ENCODE measurements at regions of chr10 and their contacts with region 1.

Region 1: DNA sequence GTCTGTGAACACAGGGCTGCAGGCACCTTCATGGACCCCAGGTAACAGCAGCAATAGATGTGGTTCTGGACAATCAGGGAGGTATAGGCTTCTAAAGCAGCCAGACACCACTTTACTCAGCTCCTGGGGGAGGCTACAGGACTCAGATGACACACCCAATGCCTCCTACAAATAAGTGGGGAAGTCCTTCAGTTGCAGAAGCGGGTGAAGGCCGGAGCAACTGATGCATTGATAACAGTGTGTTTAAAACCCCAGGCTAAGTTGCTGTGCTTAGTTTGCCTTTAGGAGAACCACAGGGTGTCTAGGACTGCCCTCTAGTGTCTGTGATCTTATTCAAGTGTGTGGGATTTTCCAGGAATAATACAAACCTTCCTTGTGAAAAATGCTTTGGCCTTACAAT is 5.9 kb upstream of the ITGA8 start:
- DNase-seq: no peak
- ATAC-seq: no peak
- H3K4me3 ChIP-seq: no peak overlapping the region
- H3K27ac ChIP-seq: no peak overlapping the region
- H3K4me1 ChIP-seq: no peaks in the 10 kb centered on the region
- H3K27me3 ChIP-seq: peaks cover 0 to 5% (median 0%) of the 10 kb centered on the region in 3 donors
- CTCF ChIP-seq: peak in 3 of 5 experiments; percentile 21 to 46 (median 45)
- POLR2A ChIP-seq: no peak

Region 2: DNA sequence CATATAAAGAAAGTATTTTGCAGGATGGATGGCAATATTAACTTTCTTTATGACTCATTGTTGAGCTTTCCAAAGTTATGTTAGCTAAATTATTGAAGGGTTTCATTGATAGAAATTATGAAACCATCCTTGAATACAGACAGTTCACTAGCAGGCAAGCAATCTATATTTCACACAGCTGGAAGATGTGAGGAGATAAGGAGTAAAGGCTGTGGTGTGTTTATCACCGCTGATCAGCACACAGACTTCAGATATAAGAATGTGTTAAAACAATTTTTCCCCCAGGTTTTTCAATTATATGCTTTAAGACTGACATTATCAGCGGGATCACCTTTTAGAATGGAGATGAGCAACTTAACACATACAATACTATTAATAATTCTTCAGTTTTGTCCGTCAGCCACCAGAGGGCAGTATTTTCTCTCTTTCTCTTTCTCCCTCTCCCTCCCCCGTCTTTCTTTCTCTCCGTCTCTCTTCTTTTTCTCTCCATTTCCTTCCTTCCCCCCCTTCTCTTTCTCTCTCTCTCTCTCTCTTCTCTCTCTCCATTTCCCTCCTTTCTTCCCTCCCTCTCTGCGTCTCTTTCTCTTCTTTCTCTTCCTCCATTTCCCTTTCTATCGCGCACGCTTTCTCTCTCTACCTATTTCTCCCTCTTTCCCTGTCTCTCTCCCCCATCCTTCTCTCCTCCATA is 291.6 kb before region 1 on chr10:
- in situ Hi-C with region 1: loop called (anchors 5 to 25 kb)
- intact Hi-C with region 1: loop called (anchors 10 kb)
- DNase-seq: no peak
- ATAC-seq: peak; percentile 70 to 86
- H3K4me3 ChIP-seq: peak overlapping the region; percentile 39 to 50 (median 41)
- H3K27ac ChIP-seq: no peak overlapping the region
- H3K4me1 ChIP-seq: peaks cover 0 to 4% of the 10 kb centered on the region in 2 donors
- H3K27me3 ChIP-seq: no peaks in the 10 kb centered on the region
- CTCF ChIP-seq: peak; percentile 32 to 70 (median 57)
- POLR2A ChIP-seq: no peak

Region 3: DNA sequence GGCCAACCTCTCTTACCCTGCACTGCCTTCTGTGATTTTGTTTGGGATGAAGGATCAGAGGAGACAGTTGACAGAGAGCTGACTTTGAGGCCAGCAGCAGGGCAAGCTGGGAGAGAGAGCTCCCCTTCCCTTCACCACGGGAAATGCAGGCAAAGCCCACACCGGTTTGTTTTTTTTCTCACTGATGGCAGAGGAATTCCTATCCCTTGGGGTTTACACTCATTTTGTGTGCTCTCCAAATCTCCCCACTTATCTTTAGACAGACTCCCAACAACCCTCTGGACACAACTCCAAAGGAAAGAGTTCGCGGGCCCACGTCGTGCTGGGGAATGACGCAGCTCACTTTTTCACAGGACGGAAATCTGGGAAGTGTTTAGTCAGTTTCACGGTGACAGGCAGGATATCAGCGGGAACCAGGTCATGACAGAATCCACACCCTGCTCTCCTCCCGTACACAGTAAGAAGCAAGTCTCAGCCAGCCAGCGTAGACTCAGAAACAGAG is 286.2 kb before region 1 on chr10:
- in situ Hi-C with region 1: loop called (anchors 5 to 25 kb)
- intact Hi-C with region 1: loop called (anchors 10 kb)
- DNase-seq: no peak
- ATAC-seq: peak; percentile 51 to 62
- H3K4me3 ChIP-seq: peak overlapping the region; percentile 27 to 44 (median 36)
- H3K27ac ChIP-seq: peak overlapping the region in 2 of 4 donors; percentile 33 to 48
- H3K4me1 ChIP-seq: peaks cover 0 to 4% of the 10 kb centered on the region in 2 donors
- H3K27me3 ChIP-seq: no peaks in the 10 kb centered on the region
- CTCF ChIP-seq: peak in 1 of 5 experiments; percentile 12
- POLR2A ChIP-seq: no peak

Region 4: DNA sequence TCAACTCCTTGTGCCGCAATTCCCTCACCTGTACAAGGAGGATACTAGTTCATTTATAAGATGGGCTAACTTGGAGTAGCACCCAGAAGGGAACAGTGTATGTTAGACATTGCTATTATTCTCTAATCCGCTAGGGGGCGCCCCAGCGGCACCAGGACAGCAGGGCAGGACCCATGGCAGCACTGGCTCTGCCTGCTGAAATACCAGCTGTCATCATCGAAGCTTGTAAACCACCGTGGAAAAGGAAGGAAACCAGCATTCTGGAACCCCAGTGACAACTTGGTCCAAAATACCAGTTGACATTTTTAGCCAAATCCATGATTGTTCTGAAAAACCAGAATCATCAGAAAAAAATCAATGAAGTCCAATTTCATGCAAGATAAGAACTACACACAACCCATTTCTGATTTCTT is 140.3 kb before region 1 on chr10:
- in situ Hi-C with region 1: no loop called
- intact Hi-C with region 1: loop called (anchors 10 kb)
- DNase-seq: peak in 1 of 2 donors; percentile 3
- ATAC-seq: no peak
- H3K4me3 ChIP-seq: no peak overlapping the region
- H3K27ac ChIP-seq: no peak overlapping the region
- H3K4me1 ChIP-seq: no peaks in the 10 kb centered on the region
- H3K27me3 ChIP-seq: no peaks in the 10 kb centered on the region
- CTCF ChIP-seq: peak; percentile 29 to 66 (median 47)
- POLR2A ChIP-seq: no peak